PC-3 (cell line): ENCODE measurements at regions of chr6 and their contacts with region 1.

Region 1: DNA sequence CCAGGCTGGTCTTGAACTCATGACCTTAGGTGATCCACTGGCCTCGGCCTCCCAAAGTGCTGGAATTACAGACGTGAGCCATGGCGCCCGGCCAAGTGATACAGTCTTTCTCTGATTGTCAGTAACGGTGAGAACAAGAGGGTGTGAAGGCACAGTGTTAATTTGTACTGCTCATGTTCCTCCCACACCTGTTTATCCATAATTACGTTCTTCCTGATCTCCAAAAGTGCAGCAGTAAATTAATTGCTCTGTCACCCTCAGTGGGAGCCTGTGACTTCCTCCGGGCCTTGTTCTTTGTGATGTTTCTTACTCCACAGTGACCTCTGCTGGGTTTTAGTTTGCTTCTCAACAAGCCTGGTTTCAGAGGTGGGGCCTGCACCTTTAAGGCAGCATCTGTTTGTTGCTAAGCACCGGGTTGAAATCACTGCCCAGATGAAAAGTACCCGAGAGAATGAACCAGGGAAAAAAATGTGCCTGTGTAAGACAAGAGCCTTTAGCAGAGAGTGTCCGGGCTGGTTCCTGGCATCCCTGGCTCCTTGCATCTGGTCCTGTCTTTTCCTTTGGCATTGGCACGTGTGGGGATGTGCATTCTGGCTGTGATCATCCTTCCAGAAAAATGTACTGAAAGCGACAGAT is 89.1 kb upstream of the CLDN20 start:
- DNase-seq: peak; percentile 79
- ATAC-seq: peak; percentile 73
- H3K4me3 ChIP-seq: no peak overlapping the region
- H3K27ac ChIP-seq: no peak overlapping the region
- H3K4me1 ChIP-seq: peaks cover 22% of the 10 kb centered on the region
- H3K27me3 ChIP-seq: no peaks in the 10 kb centered on the region
- CTCF ChIP-seq: peak; percentile 78

Region 2: GRCh38 chr6:154868143-154868594 is 306.5 kb before region 1 on chr6:
- CTCF ChIA-PET with region 1: interaction called, 7 read pairs
- POLR2A ChIA-PET with region 1: interaction called, 3 read pairs
- intact Hi-C with region 1: loop called (anchors 1 kb)
- DNase-seq: peak; percentile 66
- ATAC-seq: no peak
- H3K4me3 ChIP-seq: no peak overlapping the region
- H3K27ac ChIP-seq: no peak overlapping the region
- H3K4me1 ChIP-seq: peaks cover 9% of the 10 kb centered on the region; the same call in 1 of the 2 replicates
- H3K27me3 ChIP-seq: no peaks in the 10 kb centered on the region
- CTCF ChIP-seq: peak; percentile 78

Region 3: DNA sequence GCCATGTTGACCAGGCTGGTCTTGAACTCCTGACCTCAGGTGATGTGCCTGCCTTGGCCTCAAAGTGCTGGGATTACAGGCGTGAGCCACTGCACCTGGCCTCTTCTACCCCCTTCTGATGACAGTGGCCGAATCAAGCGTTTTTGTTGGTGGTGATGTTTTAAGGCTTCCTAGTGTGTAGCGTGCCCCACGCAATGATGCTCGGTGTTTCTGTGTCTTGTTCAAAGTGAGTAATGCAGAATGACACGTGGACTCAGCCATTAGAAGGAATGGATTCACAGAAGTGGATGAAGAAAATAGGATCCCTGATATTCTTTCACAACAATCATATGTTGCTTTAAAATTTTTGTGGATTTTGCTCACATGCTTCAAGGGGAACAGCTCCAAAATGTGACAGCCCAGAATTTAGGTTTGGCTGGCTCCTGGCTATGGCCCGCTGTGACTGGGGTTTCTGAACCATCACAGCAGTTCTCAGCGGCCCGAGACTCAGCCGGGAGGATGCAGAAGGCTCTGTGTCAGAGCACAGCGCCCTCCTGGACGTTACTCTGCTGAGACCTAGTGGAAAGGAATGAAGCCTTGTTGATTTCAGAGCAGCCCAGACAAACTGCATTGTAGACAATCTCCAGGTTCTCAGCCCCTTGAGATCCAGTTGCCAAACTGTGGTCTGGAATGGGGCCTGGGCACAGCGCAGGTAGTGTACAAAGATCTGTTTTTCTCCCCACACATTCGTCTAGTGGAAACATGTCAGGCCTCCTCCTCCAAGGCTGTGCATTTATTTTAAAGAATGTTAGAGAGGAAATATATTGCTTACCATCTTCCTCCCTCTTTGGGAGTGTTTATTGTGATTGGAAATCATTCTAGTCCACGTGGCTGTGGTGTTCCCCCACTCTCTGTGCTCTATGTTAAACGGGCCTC is 237.1 kb before region 1 on chr6:
- CTCF ChIA-PET with region 1: no interaction called
- POLR2A ChIA-PET with region 1: interaction called, 13 read pairs
- intact Hi-C with region 1: no loop called
- DNase-seq: no peak
- ATAC-seq: no peak
- H3K4me3 ChIP-seq: no peak overlapping the region
- H3K27ac ChIP-seq: no peak overlapping the region
- H3K4me1 ChIP-seq: peaks cover 8% of the 10 kb centered on the region
- H3K27me3 ChIP-seq: no peaks in the 10 kb centered on the region
- CTCF ChIP-seq: no peak

Region 4: DNA sequence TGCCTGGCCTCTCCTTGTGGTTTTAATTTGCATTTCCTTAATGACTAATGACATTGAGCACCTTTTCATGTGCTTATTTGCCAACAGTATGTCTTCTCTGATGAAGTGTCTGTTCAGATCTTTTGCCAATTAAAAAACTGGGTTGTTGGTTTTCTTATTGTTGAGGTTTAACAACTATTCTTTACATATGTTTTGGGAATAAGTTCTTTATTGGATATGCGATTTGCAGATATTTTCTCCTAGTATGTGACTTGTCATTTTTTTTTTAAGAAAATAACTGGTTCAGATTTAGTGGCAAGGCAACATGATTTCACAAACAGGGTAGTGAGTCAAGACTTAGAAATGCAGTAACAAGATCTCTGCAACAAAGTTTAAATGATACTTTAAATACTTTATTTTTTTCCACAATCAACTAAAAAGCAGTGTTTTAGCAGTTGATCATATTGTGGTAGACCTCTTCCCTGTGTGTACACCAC is 111.8 kb before region 1 on chr6:
- CTCF ChIA-PET with region 1: no interaction called
- POLR2A ChIA-PET with region 1: no interaction called
- intact Hi-C with region 1: loop called (anchors 5 kb)
- DNase-seq: peak; percentile 51
- ATAC-seq: peak; percentile 40
- H3K4me3 ChIP-seq: no peak overlapping the region
- H3K27ac ChIP-seq: no peak overlapping the region
- H3K4me1 ChIP-seq: peaks cover 5% of the 10 kb centered on the region
- H3K27me3 ChIP-seq: no peaks in the 10 kb centered on the region
- CTCF ChIP-seq: no peak

Region 5: DNA sequence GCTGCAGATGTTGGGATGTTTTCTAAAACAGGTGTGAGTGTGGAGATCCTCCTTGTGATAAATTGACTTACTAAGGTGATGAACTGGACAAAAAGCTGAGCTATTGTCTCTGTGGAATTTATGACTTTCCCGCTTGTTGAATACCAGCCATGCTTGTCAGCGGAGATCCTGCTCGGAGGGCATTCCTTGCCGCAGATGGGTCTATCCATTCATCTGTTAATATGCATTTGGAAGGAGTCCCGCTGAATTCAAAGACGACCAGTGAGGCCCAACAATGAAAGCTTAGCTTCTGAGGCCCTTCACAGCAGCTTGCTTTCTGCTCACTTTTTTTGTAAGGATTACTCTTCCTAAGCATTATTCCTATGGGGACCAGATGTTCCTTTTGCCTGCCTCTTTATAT is 54.7 kb before region 1 on chr6:
- CTCF ChIA-PET with region 1: no interaction called
- POLR2A ChIA-PET with region 1: no interaction called
- intact Hi-C with region 1: no loop called
- DNase-seq: no peak
- ATAC-seq: no peak
- H3K4me3 ChIP-seq: no peak overlapping the region
- H3K27ac ChIP-seq: no peak overlapping the region
- H3K4me1 ChIP-seq: no peaks in the 10 kb centered on the region
- H3K27me3 ChIP-seq: no peaks in the 10 kb centered on the region
- CTCF ChIP-seq: no peak

Region 6: GRCh38 chr6:155248008-155249001 is 73.6 kb after region 1 on chr6:
- CTCF ChIA-PET with region 1: interaction called, 4 read pairs
- POLR2A ChIA-PET with region 1: no interaction called
- intact Hi-C with region 1: loop called (anchors 1 kb)
- DNase-seq: peak; percentile 32
- ATAC-seq: peak; percentile 35; the same call in 1 of the 2 replicates
- H3K4me3 ChIP-seq: no peak overlapping the region
- H3K27ac ChIP-seq: no peak overlapping the region
- H3K4me1 ChIP-seq: peaks cover 1% of the 10 kb centered on the region
- H3K27me3 ChIP-seq: no peaks in the 10 kb centered on the region
- CTCF ChIP-seq: peak; percentile 75